ENCODE measurements at regions of chr7 and their contacts with region 1.

Region 1: DNA sequence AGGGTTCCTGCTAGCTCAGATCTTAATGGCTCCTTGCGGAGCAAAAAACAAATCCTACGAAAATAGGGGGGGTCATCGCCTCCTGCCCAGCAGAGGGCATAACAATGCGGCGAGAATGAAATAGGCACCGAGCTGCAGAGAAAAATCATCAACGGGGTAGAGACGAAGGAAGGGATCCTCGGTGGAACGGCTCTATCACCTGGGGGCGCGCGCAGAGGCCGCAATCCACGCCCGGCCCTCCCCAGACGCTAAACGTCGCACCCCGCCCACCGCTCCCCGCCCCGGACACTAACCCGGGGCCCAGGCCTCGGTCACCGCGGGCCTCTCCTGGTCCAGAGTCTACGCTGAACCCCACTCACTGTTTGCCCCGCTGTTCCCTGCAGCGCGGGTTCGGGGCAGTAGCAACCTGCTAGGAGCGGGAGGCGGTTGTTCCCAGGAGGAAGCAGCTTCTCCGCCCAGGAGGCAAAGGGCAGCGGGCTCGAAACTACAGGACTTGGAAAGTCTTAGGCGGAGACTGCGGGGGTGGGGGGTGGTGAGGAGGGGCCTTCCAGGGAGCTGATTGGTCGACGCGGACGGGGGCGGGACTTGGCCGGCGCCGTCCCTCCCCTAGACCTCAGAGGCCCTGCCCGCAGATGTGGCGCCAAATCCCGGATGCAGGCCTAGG is at the start of gene TCAF1:
- DNase-seq: peak; percentile 99 to 100 (median 100)
- ATAC-seq: peak; percentile 95
- H3K4me3 ChIP-seq: peak within 1 kb of the TSS; percentile 79
- H3K27ac ChIP-seq: peak within 1 kb of the TSS; percentile 86
- H3K4me1 ChIP-seq: peaks cover 9 to 14% of the 10 kb centered on the region in 2 experiments
- H3K27me3 ChIP-seq: no peaks in the 10 kb centered on the region; a peak in 1 of 5 replicates
- CTCF ChIP-seq: peak; percentile 42 to 53 (median 49); a peak in 5 of 6 replicates
- EP300 ChIP-seq: no peak; the same call in 1 of the 2 replicates
- POLR2A ChIP-seq: peak; percentile 95
- RAD21 ChIP-seq: no peak; a peak in 1 of 4 replicates
- polyA plus RNA-seq, gene TCAF1: 6.2 to 9.6 TPM

Region 2: DNA sequence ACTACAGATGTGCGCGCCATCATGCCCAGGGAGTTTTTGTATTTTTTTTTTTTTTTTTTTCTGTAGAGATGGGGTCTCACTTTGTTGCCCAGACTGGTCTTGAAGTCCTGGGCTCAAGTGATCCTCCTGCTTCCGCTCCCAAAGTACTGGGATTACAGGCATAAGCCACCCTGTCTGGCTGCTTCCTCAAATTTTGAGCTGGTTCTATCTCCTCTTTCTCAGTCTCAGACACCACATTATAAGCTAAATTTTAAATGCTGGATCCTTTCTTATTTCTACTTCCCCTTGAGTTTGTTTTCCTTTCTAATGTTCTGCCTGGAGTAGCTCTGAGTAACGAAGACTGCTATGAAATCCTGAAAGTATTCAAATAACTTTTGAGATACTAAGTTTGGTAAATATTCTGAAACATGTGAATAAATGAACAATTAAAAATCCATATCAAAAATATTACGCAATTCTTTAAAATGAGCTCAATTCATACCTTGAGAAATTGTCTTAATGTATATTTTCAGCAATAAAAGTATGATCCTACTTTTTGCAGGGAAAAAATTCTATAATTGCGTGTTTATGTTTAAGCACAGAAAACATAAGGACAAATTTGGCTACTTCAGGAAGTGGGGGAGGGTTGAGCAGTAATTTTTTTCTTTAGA is 14.8 kb before region 1 on chr7:
- CTCF ChIA-PET with region 1: no interaction called
- POLR2A ChIA-PET with region 1: interaction called, 27 read pairs
- in situ Hi-C with region 1: no loop called
- intact Hi-C with region 1: no loop called
- DNase-seq: peak in 2 of 4 experiments; percentile 2 to 4
- ATAC-seq: no peak
- H3K4me3 ChIP-seq: no peak overlapping the region
- H3K27ac ChIP-seq: no peak overlapping the region
- H3K4me1 ChIP-seq: peaks cover 6 to 11% of the 10 kb centered on the region in 2 experiments; a peak in 3 of 5 replicates
- H3K27me3 ChIP-seq: no peaks in the 10 kb centered on the region
- CTCF ChIP-seq: no peak
- EP300 ChIP-seq: no peak
- POLR2A ChIP-seq: no peak
- RAD21 ChIP-seq: no peak

Region 3: GRCh38 chr7:143958781-143959180 is 57.0 kb after region 1 on chr7:
- CTCF ChIA-PET with region 1: no interaction called
- POLR2A ChIA-PET with region 1: no interaction called
- in situ Hi-C with region 1: no loop called
- intact Hi-C with region 1: no loop called
- DNase-seq: no peak
- ATAC-seq: no peak
- H3K4me3 ChIP-seq: no peak overlapping the region
- H3K27ac ChIP-seq: no peak overlapping the region
- H3K4me1 ChIP-seq: no peaks in the 10 kb centered on the region
- H3K27me3 ChIP-seq: no peaks in the 10 kb centered on the region
- CTCF ChIP-seq: no peak
- EP300 ChIP-seq: no peak
- POLR2A ChIP-seq: no peak
- RAD21 ChIP-seq: no peak

Region 4: DNA sequence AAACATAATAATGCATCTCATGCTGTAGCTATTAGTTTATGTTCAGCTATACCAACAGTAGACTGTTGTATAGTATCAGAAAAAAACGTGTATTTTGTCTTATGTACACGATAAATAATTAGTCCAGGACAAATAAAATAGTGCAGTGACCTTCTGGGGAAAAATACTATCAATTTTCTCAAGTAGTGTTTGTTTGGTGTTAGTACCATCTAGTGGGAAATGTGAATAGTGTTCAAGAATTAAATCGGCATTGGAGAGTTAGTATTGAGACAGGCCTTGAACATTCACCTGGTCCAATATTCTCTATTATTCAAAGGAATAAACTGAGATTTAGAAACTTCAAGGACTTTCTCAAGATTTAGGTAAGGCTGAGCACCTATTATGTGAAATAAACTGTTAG is 125.3 kb after region 1 on chr7:
- CTCF ChIA-PET with region 1: interaction called, 4 read pairs
- POLR2A ChIA-PET with region 1: no interaction called
- in situ Hi-C with region 1: no loop called
- intact Hi-C with region 1: loop called (anchors 5 kb)
- DNase-seq: peak in 1 of 4 experiments; percentile 27
- ATAC-seq: peak; percentile 63
- H3K4me3 ChIP-seq: no peak overlapping the region
- H3K27ac ChIP-seq: no peak overlapping the region
- H3K4me1 ChIP-seq: no peaks in the 10 kb centered on the region
- H3K27me3 ChIP-seq: peaks cover 0 to 3% of the 10 kb centered on the region in 2 experiments; a peak in 1 of 5 replicates
- CTCF ChIP-seq: peak in 1 of 3 experiments; percentile 62; a peak in 3 of 6 replicates
- EP300 ChIP-seq: no peak
- POLR2A ChIP-seq: no peak
- RAD21 ChIP-seq: peak; percentile 56 to 78

Region 5: DNA sequence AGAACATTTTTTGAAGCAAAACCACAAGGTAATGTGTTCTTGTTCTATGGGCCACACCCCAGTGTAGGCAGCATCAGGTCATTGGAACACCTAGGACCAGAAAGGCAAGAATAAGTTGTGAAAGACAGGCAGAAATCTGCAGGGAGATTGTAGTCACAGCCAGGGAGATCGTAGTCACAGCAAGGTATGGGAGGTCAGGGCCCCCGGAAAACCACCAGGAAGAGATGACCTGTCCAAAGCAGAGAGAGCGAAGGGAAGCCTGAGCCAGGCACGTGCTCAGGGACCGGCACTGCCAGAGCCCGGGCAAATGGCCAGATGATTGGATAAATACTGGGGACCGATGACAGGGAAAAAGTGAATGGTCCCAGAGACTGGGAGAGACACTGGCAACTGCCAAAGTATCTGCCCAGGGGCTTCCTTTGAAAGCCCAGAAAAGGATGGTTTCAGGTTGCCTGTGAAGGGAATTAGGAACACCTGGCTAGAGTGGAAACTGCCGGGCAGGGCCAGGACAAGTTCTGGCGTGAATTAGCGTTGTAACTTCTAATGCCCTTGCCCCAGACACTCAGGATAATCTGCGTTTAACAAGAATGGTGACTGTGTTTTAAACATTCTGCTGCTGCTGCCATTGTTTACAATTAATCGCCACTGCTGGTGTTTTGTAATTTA is 505.6 kb after region 1 on chr7:
- CTCF ChIA-PET with region 1: no interaction called
- POLR2A ChIA-PET with region 1: no interaction called
- in situ Hi-C with region 1: no loop called
- intact Hi-C with region 1: loop called (anchors 10 kb)
- DNase-seq: no peak
- ATAC-seq: no peak
- H3K4me3 ChIP-seq: no peak overlapping the region
- H3K27ac ChIP-seq: no peak overlapping the region
- H3K4me1 ChIP-seq: no peaks in the 10 kb centered on the region
- H3K27me3 ChIP-seq: peaks cover 15 to 18% of the 10 kb centered on the region in 2 experiments; a peak in 4 of 5 replicates
- CTCF ChIP-seq: no peak
- EP300 ChIP-seq: no peak
- POLR2A ChIP-seq: no peak
- RAD21 ChIP-seq: no peak